ENCODE measurements at regions of chrX and their contacts with region 1.

Region 1: GRCh38 chrX:135086197-135086854 is 34.0 kb downstream of the ETDB start:
- DNase-seq: peak in 1 of 5 donors; percentile 37
- H3K4me3 ChIP-seq: no peak overlapping the region
- H3K27ac ChIP-seq: no peak overlapping the region
- H3K4me1 ChIP-seq: no peaks in the 10 kb centered on the region
- H3K27me3 ChIP-seq: no peaks in the 10 kb centered on the region
- CTCF ChIP-seq: peak in 2 of 3 donors; percentile 8 to 54
- EP300 ChIP-seq: no peak
- POLR2A ChIP-seq: no peak

Region 2: GRCh38 chrX:134963041-134963440 is 123.3 kb before region 1 on chrX:
- intact Hi-C with region 1: loop called in 2 of 4 experiments (anchors 5 kb)
- DNase-seq: no peak
- H3K4me3 ChIP-seq: no peak overlapping the region
- H3K27ac ChIP-seq: no peak overlapping the region
- H3K4me1 ChIP-seq: no peaks in the 10 kb centered on the region
- H3K27me3 ChIP-seq: no peaks in the 10 kb centered on the region
- CTCF ChIP-seq: no peak
- EP300 ChIP-seq: no peak
- POLR2A ChIP-seq: no peak

Region 3: GRCh38 chrX:134969726-134970125 is 116.6 kb before region 1 on chrX:
- intact Hi-C with region 1: loop called in 2 of 4 experiments (anchors 5 kb)
- DNase-seq: no peak
- H3K4me3 ChIP-seq: no peak overlapping the region
- H3K27ac ChIP-seq: no peak overlapping the region
- H3K4me1 ChIP-seq: no peaks in the 10 kb centered on the region
- H3K27me3 ChIP-seq: no peaks in the 10 kb centered on the region
- CTCF ChIP-seq: no peak
- EP300 ChIP-seq: no peak
- POLR2A ChIP-seq: no peak

Measured in ovary (tissue), 10 donors.